Endothelial cell of umbilical vein (primary cell): ENCODE measurements at regions of chr16 and their contacts with region 1.

Region 1: GRCh38 chr16:30052671-30053372 is 12.7 kb upstream of the ALDOA start:
- DNase-seq: peak; percentile 88
- H3K4me3 ChIP-seq: peak overlapping the region; percentile 62 to 75 (median 70)
- H3K27ac ChIP-seq: peak overlapping the region; percentile 72
- H3K4me1 ChIP-seq: peaks cover 35% of the 10 kb centered on the region
- H3K27me3 ChIP-seq: no peaks in the 10 kb centered on the region
- CTCF ChIP-seq: no peak
- POLR2A ChIP-seq: no peak

Region 2: DNA sequence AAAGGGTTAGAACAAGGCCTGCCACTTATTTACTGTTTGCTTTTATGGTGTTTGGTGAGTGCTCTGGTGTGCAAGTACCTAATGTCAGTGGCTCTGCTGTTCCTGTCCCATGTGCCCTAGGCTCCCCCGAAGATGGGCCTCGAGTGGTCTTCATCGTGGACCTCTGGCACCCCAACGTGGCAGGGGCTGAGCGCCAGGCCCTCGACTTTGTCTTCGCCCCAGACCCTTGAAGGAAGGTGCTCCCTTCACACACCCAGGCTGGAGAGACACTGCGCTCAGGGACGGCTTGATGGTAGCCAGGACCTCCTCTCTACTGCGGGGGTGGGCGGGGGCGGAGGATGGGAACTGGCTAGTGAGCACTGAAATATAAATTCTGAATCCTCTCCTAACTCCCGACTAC is 147.2 kb before region 1 on chr16:
- CTCF ChIA-PET with region 1: no interaction called
- POLR2A ChIA-PET with region 1: no interaction called
- dilution Hi-C with region 1: no loop called
- intact Hi-C with region 1: no loop called
- DNase-seq: no peak
- H3K4me3 ChIP-seq: no peak overlapping the region
- H3K27ac ChIP-seq: no peak overlapping the region
- H3K4me1 ChIP-seq: peaks cover 1% of the 10 kb centered on the region
- H3K27me3 ChIP-seq: no peaks in the 10 kb centered on the region
- CTCF ChIP-seq: no peak
- POLR2A ChIP-seq: no peak

Region 3: GRCh38 chr16:30032083-30032819 is 20.6 kb before region 1 on chr16:
- CTCF ChIA-PET with region 1: interaction called, 20 read pairs
- POLR2A ChIA-PET with region 1: no interaction called
- dilution Hi-C with region 1: no loop called
- intact Hi-C with region 1: loop called (anchors 2 kb)
- DNase-seq: peak; percentile 56
- H3K4me3 ChIP-seq: no peak overlapping the region
- H3K27ac ChIP-seq: no peak overlapping the region
- H3K4me1 ChIP-seq: no peaks in the 10 kb centered on the region
- H3K27me3 ChIP-seq: peaks cover 19 to 20% of the 10 kb centered on the region in 2 experiments
- CTCF ChIP-seq: peak; percentile 75 to 80
- POLR2A ChIP-seq: no peak

Region 4: GRCh38 chr16:30041846-30042267 is 11.0 kb before region 1 on chr16:
- CTCF ChIA-PET with region 1: interaction called, 38 read pairs
- POLR2A ChIA-PET with region 1: interaction called, 7 read pairs
- dilution Hi-C with region 1: no loop called
- intact Hi-C with region 1: no loop called
- DNase-seq: peak; percentile 66
- H3K4me3 ChIP-seq: no peak overlapping the region
- H3K27ac ChIP-seq: no peak overlapping the region
- H3K4me1 ChIP-seq: no peaks in the 10 kb centered on the region
- H3K27me3 ChIP-seq: no peaks in the 10 kb centered on the region
- CTCF ChIP-seq: peak in 1 of 2 donors; percentile 23
- POLR2A ChIP-seq: no peak

Region 5: GRCh38 chr16:30065143-30065850 is 12.5 kb after region 1 on chr16 and contains the start of gene ALDOA:
- CTCF ChIA-PET with region 1: interaction called, 53 read pairs
- POLR2A ChIA-PET with region 1: interaction called, 21 read pairs
- dilution Hi-C with region 1: no loop called
- intact Hi-C with region 1: loop called (anchors 1 kb)
- DNase-seq: peak; percentile 99
- H3K4me3 ChIP-seq: peak within 1 kb of the TSS; percentile 71 to 95 (median 91)
- H3K27ac ChIP-seq: peak within 1 kb of the TSS; percentile 78
- H3K4me1 ChIP-seq: peaks cover 29% of the 10 kb centered on the region
- H3K27me3 ChIP-seq: no peaks in the 10 kb centered on the region
- CTCF ChIP-seq: no peak
- POLR2A ChIP-seq: peak; percentile 98
- total RNA-seq, gene ALDOA: 1,029 and 1,114 TPM in 2 replicates